CD4-positive, alpha-beta memory T cell (primary cell): ENCODE measurements at regions of chr7 and their contacts with region 1.

Region 1: DNA sequence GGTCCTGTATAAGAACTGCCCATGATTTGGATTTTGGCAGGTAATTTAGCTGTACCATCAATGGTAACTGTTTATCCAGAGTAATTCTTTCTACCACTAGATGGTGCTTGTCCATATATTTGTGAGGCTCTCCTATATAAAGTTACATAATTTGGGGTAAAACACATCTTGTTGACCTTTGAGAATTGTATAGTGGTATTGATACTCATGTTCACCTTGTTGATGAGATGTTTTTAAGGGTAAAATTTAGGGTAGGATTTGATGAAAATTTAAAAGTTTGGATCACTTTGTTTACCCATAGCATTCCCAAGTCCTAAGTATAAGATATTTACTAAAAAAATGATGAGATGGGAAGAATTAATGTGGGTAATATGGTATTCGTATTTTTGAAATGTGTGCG is 31.6 kb downstream of the ST7 start:
- DNase-seq: peak in 4 of 5 donors; percentile 35 to 46 (median 39)
- H3K4me3 ChIP-seq: no peak overlapping the region
- H3K4me3 Mint-ChIP-seq: no peak overlapping the region
- H3K27ac ChIP-seq: no peak overlapping the region
- H3K27ac Mint-ChIP-seq: no peak overlapping the region
- H3K4me1 ChIP-seq: peaks cover 3% of the 10 kb centered on the region
- H3K4me1 Mint-ChIP-seq: no peaks in the 10 kb centered on the region
- H3K27me3 ChIP-seq: no peaks in the 10 kb centered on the region
- H3K27me3 Mint-ChIP-seq: no peaks in the 10 kb centered on the region

Region 2: GRCh38 chr7:116929914-116930913 is 54.7 kb before region 1 on chr7:
- CTCF ChIA-PET with region 1: interaction called, 18 read pairs
- POLR2A ChIA-PET with region 1: no interaction called
- intact Hi-C with region 1: loop called (anchors 2 kb)
- DNase-seq: peak; percentile 59 to 66 (median 63)
- H3K4me3 ChIP-seq: no peak overlapping the region
- H3K4me3 Mint-ChIP-seq: peak overlapping the region in 6 of 8 donors; percentile 17 to 69 (median 50)
- H3K27ac ChIP-seq: no peak overlapping the region
- H3K27ac Mint-ChIP-seq: no peak overlapping the region
- H3K4me1 ChIP-seq: peaks cover 7% of the 10 kb centered on the region
- H3K4me1 Mint-ChIP-seq: peaks cover 5 to 8% (median 6%) of the 10 kb centered on the region in 4 donors
- H3K27me3 ChIP-seq: no peaks in the 10 kb centered on the region
- H3K27me3 Mint-ChIP-seq: peaks cover 2 to 5% of the 10 kb centered on the region in 2 donors

Region 3: DNA sequence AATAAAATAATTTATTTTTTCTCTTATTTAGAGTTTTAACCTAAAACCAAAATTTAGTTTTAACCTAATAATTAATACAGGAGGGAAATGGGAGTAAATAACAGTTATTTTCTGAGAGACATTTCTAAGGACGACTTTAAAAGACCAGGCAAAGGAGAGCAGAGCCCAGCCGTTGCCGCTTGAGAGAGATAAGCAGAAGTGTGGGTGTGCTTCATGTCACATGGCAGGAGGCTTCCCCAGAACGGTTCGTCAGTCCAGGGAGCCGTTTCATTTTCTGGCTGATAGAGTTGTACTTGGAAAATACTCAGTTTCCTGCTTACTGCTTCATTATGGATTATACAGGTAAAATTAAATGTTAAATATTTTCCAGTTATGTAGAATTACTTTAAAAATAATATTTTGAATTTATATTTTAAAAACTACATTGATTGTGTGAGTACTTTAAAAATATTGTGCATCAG is 29.8 kb after region 1 on chr7:
- CTCF ChIA-PET with region 1: interaction called, 130 read pairs
- POLR2A ChIA-PET with region 1: interaction called, 3 read pairs
- intact Hi-C with region 1: loop called (anchors 1 kb)
- DNase-seq: no peak
- H3K4me3 ChIP-seq: no peak overlapping the region
- H3K4me3 Mint-ChIP-seq: peak overlapping the region in 1 of 8 donors; percentile 9
- H3K27ac ChIP-seq: no peak overlapping the region
- H3K27ac Mint-ChIP-seq: no peak overlapping the region
- H3K4me1 ChIP-seq: peaks cover 29% of the 10 kb centered on the region
- H3K4me1 Mint-ChIP-seq: peaks cover 33 to 45% (median 40%) of the 10 kb centered on the region in 4 donors
- H3K27me3 ChIP-seq: no peaks in the 10 kb centered on the region
- H3K27me3 Mint-ChIP-seq: peaks cover 0 to 2% of the 10 kb centered on the region in 2 donors

Region 4: GRCh38 chr7:117119192-117119924 is 134.4 kb after region 1 on chr7:
- CTCF ChIA-PET with region 1: interaction called, 406 read pairs
- POLR2A ChIA-PET with region 1: no interaction called
- intact Hi-C with region 1: loop called (anchors 1 kb)
- DNase-seq: peak; percentile 63 to 74 (median 68)
- H3K4me3 ChIP-seq: no peak overlapping the region
- H3K4me3 Mint-ChIP-seq: no peak overlapping the region
- H3K27ac ChIP-seq: no peak overlapping the region
- H3K27ac Mint-ChIP-seq: no peak overlapping the region
- H3K4me1 ChIP-seq: no peaks in the 10 kb centered on the region
- H3K4me1 Mint-ChIP-seq: no peaks in the 10 kb centered on the region
- H3K27me3 ChIP-seq: no peaks in the 10 kb centered on the region
- H3K27me3 Mint-ChIP-seq: no peaks in the 10 kb centered on the region

Region 5: DNA sequence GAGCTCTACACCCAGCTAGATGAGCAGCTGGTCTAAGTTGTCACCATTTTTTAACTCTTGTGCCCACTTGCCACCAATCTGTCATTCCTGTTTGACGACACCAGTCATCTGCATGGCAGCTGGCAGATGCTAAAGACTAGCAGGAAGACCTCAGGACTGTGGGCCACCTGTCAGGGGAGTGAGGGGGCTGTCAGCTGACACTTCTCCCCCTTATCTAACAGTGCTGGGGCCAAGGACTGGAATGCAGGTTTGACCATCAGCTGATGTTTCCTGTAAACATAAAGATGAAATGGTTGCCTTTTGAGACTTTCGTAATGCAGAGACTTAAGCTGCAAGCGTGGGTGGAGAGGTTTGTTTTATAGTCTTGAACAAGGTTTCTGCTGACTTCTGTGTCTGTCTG is 244.4 kb after region 1 on chr7:
- CTCF ChIA-PET with region 1: no interaction called
- POLR2A ChIA-PET with region 1: no interaction called
- intact Hi-C with region 1: no loop called
- DNase-seq: no peak
- H3K4me3 ChIP-seq: no peak overlapping the region
- H3K4me3 Mint-ChIP-seq: no peak overlapping the region
- H3K27ac ChIP-seq: no peak overlapping the region
- H3K27ac Mint-ChIP-seq: no peak overlapping the region
- H3K4me1 ChIP-seq: no peaks in the 10 kb centered on the region
- H3K4me1 Mint-ChIP-seq: no peaks in the 10 kb centered on the region
- H3K27me3 ChIP-seq: no peaks in the 10 kb centered on the region
- H3K27me3 Mint-ChIP-seq: no peaks in the 10 kb centered on the region

Region 6: DNA sequence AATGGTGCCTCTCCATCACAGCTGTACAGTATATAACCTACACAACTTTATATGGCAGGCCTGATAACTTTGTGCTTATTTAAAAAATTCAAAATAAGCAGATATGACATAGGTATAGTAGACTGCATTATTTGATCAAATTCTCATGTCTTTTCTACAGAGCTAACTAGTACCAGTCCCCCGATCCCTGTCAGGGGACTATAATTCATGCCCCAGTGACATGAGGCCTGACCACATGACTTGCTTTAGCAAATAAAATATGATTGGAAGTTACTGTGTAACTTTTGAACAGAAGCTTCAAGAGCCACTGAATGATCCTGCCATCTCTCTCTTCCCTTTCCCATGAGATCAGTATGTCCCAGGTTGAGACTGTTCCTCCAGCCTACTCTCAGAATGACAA is 387.2 kb after region 1 on chr7:
- CTCF ChIA-PET with region 1: no interaction called
- POLR2A ChIA-PET with region 1: no interaction called
- intact Hi-C with region 1: no loop called
- DNase-seq: no peak
- H3K4me3 ChIP-seq: no peak overlapping the region
- H3K4me3 Mint-ChIP-seq: no peak overlapping the region
- H3K27ac ChIP-seq: no peak overlapping the region
- H3K27ac Mint-ChIP-seq: no peak overlapping the region
- H3K4me1 ChIP-seq: no peaks in the 10 kb centered on the region
- H3K4me1 Mint-ChIP-seq: no peaks in the 10 kb centered on the region
- H3K27me3 ChIP-seq: no peaks in the 10 kb centered on the region
- H3K27me3 Mint-ChIP-seq: no peaks in the 10 kb centered on the region

Region 7: DNA sequence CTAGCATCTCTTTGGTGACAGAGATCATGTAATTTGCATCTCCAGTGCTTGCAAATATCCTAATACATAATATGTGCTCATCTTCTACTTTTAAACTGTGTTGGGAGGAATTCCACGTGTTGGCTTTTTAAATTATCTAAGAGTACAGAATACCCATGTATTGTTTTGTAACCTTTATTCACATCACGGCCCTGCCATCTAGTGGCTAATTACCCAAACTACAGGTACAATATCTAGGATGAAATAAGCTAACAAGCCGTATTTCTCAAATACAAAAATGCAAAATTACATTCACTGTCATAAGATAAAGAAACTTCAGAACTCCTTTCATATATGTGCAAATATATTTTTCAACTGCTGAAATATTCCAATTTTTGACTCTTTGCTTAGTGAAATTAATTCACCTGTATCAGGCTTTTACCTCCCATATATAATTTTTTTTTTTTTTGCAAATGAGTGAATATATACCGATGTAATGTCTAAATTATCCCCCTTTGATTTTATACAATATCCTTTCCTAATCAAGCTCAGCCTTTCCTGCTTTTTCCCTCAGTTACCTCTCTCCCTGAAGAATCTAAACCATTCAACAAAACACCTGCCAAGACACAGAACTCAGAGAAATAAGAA is 1168.7 kb after region 1 on chr7:
- CTCF ChIA-PET with region 1: no interaction called
- POLR2A ChIA-PET with region 1: no interaction called
- intact Hi-C with region 1: loop called (anchors 2 kb)
- DNase-seq: peak; percentile 18 to 40 (median 34)
- H3K4me3 ChIP-seq: no peak overlapping the region
- H3K4me3 Mint-ChIP-seq: no peak overlapping the region
- H3K27ac ChIP-seq: no peak overlapping the region
- H3K27ac Mint-ChIP-seq: no peak overlapping the region
- H3K4me1 ChIP-seq: no peaks in the 10 kb centered on the region
- H3K4me1 Mint-ChIP-seq: no peaks in the 10 kb centered on the region
- H3K27me3 ChIP-seq: no peaks in the 10 kb centered on the region
- H3K27me3 Mint-ChIP-seq: peaks cover 20% of the 10 kb centered on the region in 2 donors